ENCODE measurements at regions of chr7 and their contacts with region 1.

Region 1: DNA sequence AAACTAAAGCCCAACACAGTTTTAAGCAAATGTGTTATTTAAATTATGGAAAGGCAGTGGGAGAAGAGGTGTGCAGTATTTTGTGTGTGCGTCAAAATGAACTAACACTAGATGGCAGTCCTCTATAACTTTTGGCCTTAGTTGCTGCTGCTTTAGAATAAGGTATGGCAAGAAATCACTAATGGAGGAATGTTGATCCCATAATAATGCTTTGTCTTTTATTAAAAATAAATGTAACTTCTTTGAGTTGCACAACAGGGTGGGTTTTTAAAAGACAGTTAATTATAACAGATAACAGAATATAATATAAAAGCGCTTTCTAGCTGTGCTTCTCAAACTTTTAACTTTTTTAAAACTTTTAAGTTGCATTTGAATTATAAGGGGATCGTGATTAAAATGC is 56.4 kb downstream of the BBS9 start:
- DNase-seq: peak; percentile 44
- H3K4me3 ChIP-seq: no peak overlapping the region
- H3K27ac ChIP-seq: no peak overlapping the region
- H3K4me1 ChIP-seq: no peaks in the 10 kb centered on the region
- H3K27me3 ChIP-seq: no peaks in the 10 kb centered on the region
- CTCF ChIP-seq: peak; percentile 72 to 74

Region 2: GRCh38 chr7:33128990-33129805 is 56.6 kb before region 1 on chr7 and contains the start of gene BBS9:
- CTCF ChIA-PET with region 1: no interaction called
- dilution Hi-C with region 1: no loop called
- in situ Hi-C with region 1: no loop called
- intact Hi-C with region 1: no loop called
- DNase-seq: peak; percentile 95
- H3K4me3 ChIP-seq: peak within 1 kb of the TSS; percentile 56 to 84 (median 80)
- H3K27ac ChIP-seq: peak within 1 kb of the TSS; percentile 40
- H3K4me1 ChIP-seq: peaks cover 5% of the 10 kb centered on the region
- H3K27me3 ChIP-seq: no peaks in the 10 kb centered on the region
- CTCF ChIP-seq: peak in 1 of 2 donors; percentile 12
- total RNA-seq, gene BBS9: 11.3 to 17.3 TPM

Region 3: DNA sequence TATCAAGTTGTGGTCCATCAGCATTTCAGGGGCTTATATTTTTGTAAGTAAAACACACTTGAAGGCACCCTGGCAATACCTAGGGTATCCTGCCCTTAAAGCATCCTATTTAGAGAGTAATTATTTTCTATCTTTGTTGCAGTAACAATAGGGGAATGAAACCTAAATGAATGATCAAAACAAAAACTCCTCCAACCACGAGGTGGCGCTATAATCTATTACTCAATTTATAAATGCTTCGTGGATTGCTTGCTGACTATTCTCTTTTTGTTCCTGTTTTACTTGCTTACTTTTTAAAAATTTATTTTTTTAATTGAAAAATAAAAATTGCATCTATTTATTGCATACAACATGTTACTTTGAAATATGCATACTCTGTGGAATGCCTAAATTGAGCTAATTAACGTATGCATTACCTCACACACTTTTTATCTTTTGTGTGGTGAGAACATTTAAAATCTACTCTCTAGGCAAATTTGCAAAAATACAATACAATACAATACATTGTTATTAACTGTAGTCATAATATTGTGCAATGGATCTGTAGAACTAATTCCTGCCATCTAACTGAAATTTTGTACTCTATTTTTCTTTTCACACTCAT is 571.9 kb after region 1 on chr7:
- CTCF ChIA-PET with region 1: no interaction called
- dilution Hi-C with region 1: no loop called
- in situ Hi-C with region 1: no loop called
- intact Hi-C with region 1: loop called (anchors 5 kb)
- DNase-seq: peak; percentile 10
- H3K4me3 ChIP-seq: no peak overlapping the region
- H3K27ac ChIP-seq: no peak overlapping the region
- H3K4me1 ChIP-seq: no peaks in the 10 kb centered on the region
- H3K27me3 ChIP-seq: no peaks in the 10 kb centered on the region
- CTCF ChIP-seq: peak; percentile 57 to 58